Naive thymus-derived CD8-positive, alpha-beta T cell (primary cell): ENCODE measurements at regions of chr12 and their contacts with region 1.

Region 1: DNA sequence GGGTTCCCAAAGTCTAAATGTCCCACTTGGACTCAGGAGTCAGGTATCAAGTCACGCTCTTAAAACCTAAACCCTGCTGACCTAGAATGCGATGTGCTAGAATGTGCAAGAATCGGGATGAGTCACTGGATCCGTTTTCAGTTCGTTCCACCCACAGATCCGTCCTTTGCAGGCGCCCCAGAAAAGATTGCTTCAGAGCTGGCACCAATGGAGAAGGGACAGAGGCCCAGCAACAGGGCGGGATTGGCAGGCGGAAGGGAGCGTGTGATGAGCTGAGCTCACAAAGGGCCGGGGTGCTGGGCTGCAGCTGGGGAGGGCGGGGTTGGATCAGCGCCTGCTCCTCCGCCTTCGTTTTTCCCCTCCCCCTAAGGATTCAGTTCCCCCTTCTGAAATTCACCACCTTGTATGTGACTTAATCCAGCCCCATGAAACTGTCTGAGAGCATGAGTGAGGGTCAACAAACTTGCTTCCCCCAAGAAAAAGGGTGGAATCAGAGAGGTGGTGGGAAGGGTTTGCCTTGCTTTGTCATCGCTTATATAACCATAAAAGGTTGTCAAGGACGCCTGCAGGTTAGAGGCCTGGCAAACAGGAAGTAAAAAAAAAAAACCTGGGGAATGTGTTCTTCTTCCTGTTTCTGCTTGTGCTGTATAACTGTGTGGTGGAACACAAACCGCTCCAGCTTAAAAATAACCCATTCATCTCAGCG is 2.8 kb upstream of the UBC start:
- DNase-seq: peak; percentile 80 to 96 (median 92)
- ATAC-seq: peak; percentile 78 to 81
- H3K4me3 Mint-ChIP-seq: peak overlapping the region; percentile 80 to 100 (median 87)
- H3K27ac Mint-ChIP-seq: peak overlapping the region; percentile 95 to 100 (median 97)
- H3K4me1 Mint-ChIP-seq: peaks cover 49 to 94% (median 88%) of the 10 kb centered on the region in 4 donors
- H3K27me3 Mint-ChIP-seq: peaks cover 0 to 13% (median 0%) of the 10 kb centered on the region in 5 donors

Region 2: GRCh38 chr12:124906606-124907261 is 10.6 kb before region 1 on chr12:
- POLR2A ChIA-PET with region 1: interaction called, 17 read pairs
- DNase-seq: peak; percentile 61 to 97 (median 88)
- ATAC-seq: peak; percentile 74 to 89
- H3K4me3 Mint-ChIP-seq: no peak overlapping the region
- H3K27ac Mint-ChIP-seq: peak overlapping the region in 8 of 10 donors; percentile 0 to 75 (median 41)
- H3K4me1 Mint-ChIP-seq: peaks cover 16 to 30% (median 26%) of the 10 kb centered on the region in 4 donors
- H3K27me3 Mint-ChIP-seq: no peaks in the 10 kb centered on the region

Region 3: DNA sequence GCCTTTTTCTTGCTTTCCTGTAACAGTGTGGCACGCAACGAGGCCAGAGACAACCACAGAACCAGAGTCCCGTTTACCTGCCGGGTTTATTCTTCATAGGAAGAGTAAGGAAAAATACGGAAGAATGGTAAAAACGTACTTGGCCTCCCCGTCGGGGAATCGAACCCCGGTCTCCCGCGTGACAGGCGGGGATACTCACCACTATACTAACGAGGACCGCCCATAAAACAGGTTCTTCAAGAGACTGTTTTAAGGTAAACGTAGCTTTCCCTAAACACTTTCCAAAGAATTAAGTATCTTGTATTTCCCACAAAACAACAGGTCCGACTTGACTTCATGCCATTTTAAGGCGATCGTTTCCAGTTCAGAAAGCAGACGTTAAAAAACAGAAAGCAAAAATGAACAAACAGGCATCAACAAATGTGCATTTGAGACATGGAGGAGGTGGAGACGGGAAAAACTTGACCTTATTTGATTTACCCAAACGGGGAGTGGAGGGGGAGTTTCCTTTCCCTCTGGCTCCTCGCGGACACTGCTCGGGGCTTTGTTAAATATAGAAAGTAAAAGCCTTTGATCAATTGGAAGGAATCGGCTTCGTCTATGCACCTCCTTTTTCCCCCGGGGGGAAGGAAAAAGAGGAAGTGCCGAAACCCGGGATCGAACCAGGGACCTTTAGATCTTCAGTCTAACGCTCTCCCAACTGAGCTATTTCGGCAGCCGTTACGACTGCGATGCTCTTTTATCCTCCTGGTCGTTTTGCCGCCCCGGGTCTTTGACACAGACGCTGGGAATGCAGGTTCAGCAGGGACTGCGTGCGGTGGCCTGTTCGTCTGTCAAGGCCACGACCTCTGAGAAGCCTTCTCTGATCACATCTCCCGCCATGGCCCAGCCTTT is 10.2 kb after region 1 on chr12:
- POLR2A ChIA-PET with region 1: interaction called, 541 read pairs
- DNase-seq: peak; percentile 75 to 97 (median 90)
- ATAC-seq: peak; percentile 79 to 87
- H3K4me3 Mint-ChIP-seq: peak overlapping the region; percentile 89 to 99 (median 95)
- H3K27ac Mint-ChIP-seq: peak overlapping the region; percentile 88 to 100 (median 95)
- H3K4me1 Mint-ChIP-seq: peaks cover 24 to 46% (median 35%) of the 10 kb centered on the region in 4 donors
- H3K27me3 Mint-ChIP-seq: peaks cover 0 to 8% (median 0%) of the 10 kb centered on the region in 5 donors

Region 4: GRCh38 chr12:124940549-124941527 is 23.6 kb after region 1 on chr12:
- POLR2A ChIA-PET with region 1: interaction called, 541 read pairs
- DNase-seq: peak; percentile 67 to 89 (median 80)
- ATAC-seq: peak; percentile 45 to 56
- H3K4me3 Mint-ChIP-seq: no peak overlapping the region
- H3K27ac Mint-ChIP-seq: peak overlapping the region in 1 of 10 donors; percentile 33
- H3K4me1 Mint-ChIP-seq: peaks cover 0 to 10% (median 6%) of the 10 kb centered on the region in 4 donors
- H3K27me3 Mint-ChIP-seq: no peaks in the 10 kb centered on the region

Region 5: DNA sequence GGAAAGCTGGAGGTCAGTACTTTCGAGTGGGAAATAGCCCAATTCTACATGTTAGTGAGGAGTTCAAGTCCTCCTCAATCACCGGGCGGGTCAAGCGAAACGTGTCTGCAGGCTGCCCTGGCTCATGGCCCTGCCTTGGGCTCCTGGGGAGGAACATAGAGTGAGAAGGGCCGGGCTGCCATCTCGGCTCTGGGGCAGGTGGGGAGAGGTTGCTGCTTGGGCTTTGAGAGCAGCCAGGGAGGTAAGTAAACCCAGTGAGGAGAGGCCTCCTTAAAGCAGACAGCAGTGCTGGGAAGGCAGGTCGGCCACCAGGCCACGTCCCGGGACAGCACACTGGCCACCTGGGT is 29.1 kb after region 1 on chr12:
- POLR2A ChIA-PET with region 1: interaction called, 541 read pairs
- DNase-seq: no peak
- ATAC-seq: no peak
- H3K4me3 Mint-ChIP-seq: no peak overlapping the region
- H3K27ac Mint-ChIP-seq: no peak overlapping the region
- H3K4me1 Mint-ChIP-seq: peaks cover 0 to 5% (median under 1%) of the 10 kb centered on the region in 4 donors
- H3K27me3 Mint-ChIP-seq: no peaks in the 10 kb centered on the region

Region 6: GRCh38 chr12:124992874-124993625 is 75.8 kb after region 1 on chr12:
- POLR2A ChIA-PET with region 1: interaction called, 13 read pairs
- DNase-seq: peak; percentile 59 to 90 (median 82)
- ATAC-seq: peak; percentile 72 to 73
- H3K4me3 Mint-ChIP-seq: peak overlapping the region; percentile 85 to 93 (median 90)
- H3K27ac Mint-ChIP-seq: peak overlapping the region; percentile 9 to 92 (median 76)
- H3K4me1 Mint-ChIP-seq: peaks cover 17 to 51% (median 39%) of the 10 kb centered on the region in 4 donors
- H3K27me3 Mint-ChIP-seq: no peaks in the 10 kb centered on the region

Region 7: DNA sequence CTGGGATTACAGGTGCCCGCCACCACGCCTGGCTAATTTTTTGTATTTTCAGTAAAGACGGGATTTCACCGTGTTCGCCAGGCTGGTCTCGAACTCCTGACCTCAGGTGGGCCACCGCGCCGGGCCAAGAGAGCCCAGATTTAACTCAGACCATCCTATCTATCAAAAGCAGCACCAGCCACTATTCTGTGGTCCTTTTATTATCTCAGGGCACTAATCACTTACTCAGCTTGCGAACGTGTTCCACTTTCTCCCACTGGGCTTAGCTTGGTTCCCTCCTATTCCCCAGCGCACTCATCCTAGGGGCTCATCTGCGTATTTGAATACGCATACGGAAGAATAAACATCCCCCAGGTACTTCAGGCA is 131.8 kb after region 1 on chr12:
- POLR2A ChIA-PET with region 1: interaction called, 12 read pairs
- DNase-seq: no peak
- ATAC-seq: no peak
- H3K4me3 Mint-ChIP-seq: peak overlapping the region; percentile 86 to 96 (median 89)
- H3K27ac Mint-ChIP-seq: peak overlapping the region; percentile 29 to 96 (median 87)
- H3K4me1 Mint-ChIP-seq: peaks cover 2 to 15% (median 8%) of the 10 kb centered on the region in 4 donors
- H3K27me3 Mint-ChIP-seq: no peaks in the 10 kb centered on the region